ENCODE measurements at regions of chr5 and their contacts with region 1.

Region 1: GRCh38 chr5:109688971-109689739 is 572 bp upstream of the MAN2A1 start:
- DNase-seq: peak; percentile 64 to 84 (median 76)
- ATAC-seq: peak; percentile 71
- H3K4me3 Mint-ChIP-seq: peak overlapping the region; percentile 87 to 95 (median 92)
- H3K27ac Mint-ChIP-seq: peak overlapping the region; percentile 88 to 96 (median 93)
- H3K4me1 Mint-ChIP-seq: peaks cover 17 to 39% (median 33%) of the 10 kb centered on the region in 4 donors
- H3K27me3 Mint-ChIP-seq: no peaks in the 10 kb centered on the region

Region 2: DNA sequence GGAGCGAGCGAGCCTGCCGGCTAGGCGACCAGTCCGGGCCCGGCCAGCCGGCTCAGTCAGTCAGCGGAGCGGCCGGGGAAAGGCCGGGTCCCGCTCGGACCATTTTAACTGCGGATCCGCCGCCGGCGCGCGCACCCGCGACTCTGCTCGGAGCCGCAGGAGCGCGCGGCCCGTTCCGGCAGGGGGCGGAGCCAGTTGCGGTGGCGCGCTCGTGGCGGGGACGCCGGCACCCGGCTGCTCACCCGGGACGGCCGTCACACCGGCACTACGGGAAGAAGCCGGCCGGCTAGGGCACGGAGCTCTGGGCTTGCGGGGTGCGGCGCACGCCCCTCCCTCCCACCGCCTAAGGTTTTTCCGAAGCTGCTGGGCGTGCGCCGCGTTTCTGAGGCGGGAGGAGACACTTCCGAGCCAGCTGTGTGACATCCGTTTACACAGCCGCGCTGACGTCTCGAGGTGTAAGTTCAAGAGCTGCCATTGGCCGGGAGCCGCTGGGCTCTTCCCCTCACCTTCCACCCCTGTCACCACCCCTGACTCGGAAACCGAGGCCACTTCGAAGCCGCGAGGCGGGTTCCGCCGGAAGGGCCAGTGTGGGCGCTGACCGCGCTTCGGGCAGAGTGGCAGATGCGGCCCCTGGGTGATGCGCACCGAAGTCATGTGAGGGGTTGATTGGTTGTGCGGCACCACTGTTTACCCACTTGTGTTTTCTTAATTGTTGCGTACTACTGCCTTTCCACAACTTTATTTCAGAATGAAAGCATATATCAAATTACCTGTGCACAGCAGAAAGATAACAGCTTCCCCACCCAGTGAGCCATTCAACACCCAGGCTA is 1307.0 kb before region 1 on chr5 and contains the start of gene FBXL17:
- POLR2A ChIA-PET with region 1: interaction called, 10 read pairs
- DNase-seq: peak; percentile 78 to 96 (median 92)
- ATAC-seq: peak; percentile 68 to 78
- H3K4me3 Mint-ChIP-seq: peak within 1 kb of the TSS; percentile 86 to 98 (median 92)
- H3K27ac Mint-ChIP-seq: peak within 1 kb of the TSS; percentile 93 to 98 (median 96)
- H3K4me1 Mint-ChIP-seq: peaks cover 22 to 47% (median 40%) of the 10 kb centered on the region in 4 donors
- H3K27me3 Mint-ChIP-seq: no peaks in the 10 kb centered on the region
- polyA plus RNA-seq, gene FBXL17: 4.6 to 5.0 (median 4.9) TPM

Region 3: DNA sequence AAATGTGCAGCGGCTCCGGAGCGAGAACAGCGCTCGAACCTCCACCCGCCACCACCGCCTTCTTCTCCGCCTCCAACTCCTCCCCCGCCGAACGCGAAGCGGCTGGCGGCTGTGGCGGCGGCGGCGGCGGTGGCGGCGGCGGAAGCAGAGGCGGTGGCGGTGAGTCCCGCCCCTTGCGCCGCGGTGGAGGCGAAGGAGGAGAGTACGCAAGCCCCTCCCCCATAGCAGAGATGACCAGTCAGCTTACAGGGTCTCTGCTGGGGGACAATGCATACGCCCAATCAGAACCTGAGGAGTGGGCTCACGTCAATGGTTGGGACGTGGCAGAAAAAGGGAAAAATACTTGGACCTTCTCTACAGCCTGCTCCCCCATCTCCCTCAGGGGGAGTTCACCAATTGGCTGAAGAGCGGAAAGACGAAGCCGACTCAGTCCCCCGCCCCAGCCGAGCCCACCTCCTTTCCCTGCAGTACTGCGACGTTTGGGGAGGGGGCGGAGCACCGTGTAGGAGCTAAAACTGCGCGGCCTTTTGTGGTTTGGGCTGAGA is 279.2 kb before region 1 on chr5 and contains the start of gene PJA2:
- POLR2A ChIA-PET with region 1: interaction called, 21 read pairs
- DNase-seq: peak; percentile 90 to 98 (median 96)
- ATAC-seq: peak; percentile 75 to 77
- H3K4me3 Mint-ChIP-seq: peak within 1 kb of the TSS; percentile 95 to 100 (median 99)
- H3K27ac Mint-ChIP-seq: peak within 1 kb of the TSS; percentile 97 to 100 (median 100)
- H3K4me1 Mint-ChIP-seq: peaks cover 18 to 43% (median 36%) of the 10 kb centered on the region in 4 donors
- H3K27me3 Mint-ChIP-seq: peaks cover 0 to 3% (median 0%) of the 10 kb centered on the region in 5 donors
- polyA plus RNA-seq, gene PJA2: 46.0 to 54.4 (median 47.7) TPM

Region 4: GRCh38 chr5:109857405-109858031 is 168.4 kb after region 1 on chr5:
- POLR2A ChIA-PET with region 1: interaction called, 10 read pairs
- DNase-seq: peak in 6 of 10 donors; percentile 8 to 75 (median 44)
- ATAC-seq: peak; percentile 74 to 85
- H3K4me3 Mint-ChIP-seq: peak overlapping the region; percentile 37 to 86 (median 70)
- H3K27ac Mint-ChIP-seq: peak overlapping the region; percentile 84 to 96 (median 93)
- H3K4me1 Mint-ChIP-seq: peaks cover 32 to 83% (median 78%) of the 10 kb centered on the region in 4 donors
- H3K27me3 Mint-ChIP-seq: no peaks in the 10 kb centered on the region

Region 5: GRCh38 chr5:109921735-109922380 is 232.7 kb after region 1 on chr5:
- POLR2A ChIA-PET with region 1: interaction called, 61 read pairs
- DNase-seq: peak; percentile 29 to 90 (median 72)
- ATAC-seq: peak; percentile 89 to 91
- H3K4me3 Mint-ChIP-seq: peak overlapping the region; percentile 71 to 91 (median 84)
- H3K27ac Mint-ChIP-seq: peak overlapping the region; percentile 93 to 100 (median 97)
- H3K4me1 Mint-ChIP-seq: peaks cover 35 to 72% (median 51%) of the 10 kb centered on the region in 4 donors
- H3K27me3 Mint-ChIP-seq: no peaks in the 10 kb centered on the region

Region 6: GRCh38 chr5:110054240-110054639 is 365.1 kb after region 1 on chr5:
- POLR2A ChIA-PET with region 1: interaction called, 23 read pairs
- DNase-seq: peak; percentile 39 to 93 (median 83)
- ATAC-seq: peak; percentile 93 to 96
- H3K4me3 Mint-ChIP-seq: peak overlapping the region; percentile 20 to 82 (median 52)
- H3K27ac Mint-ChIP-seq: peak overlapping the region; percentile 62 to 92 (median 86)
- H3K4me1 Mint-ChIP-seq: peaks cover 11 to 48% (median 43%) of the 10 kb centered on the region in 4 donors
- H3K27me3 Mint-ChIP-seq: no peaks in the 10 kb centered on the region

Region 7: DNA sequence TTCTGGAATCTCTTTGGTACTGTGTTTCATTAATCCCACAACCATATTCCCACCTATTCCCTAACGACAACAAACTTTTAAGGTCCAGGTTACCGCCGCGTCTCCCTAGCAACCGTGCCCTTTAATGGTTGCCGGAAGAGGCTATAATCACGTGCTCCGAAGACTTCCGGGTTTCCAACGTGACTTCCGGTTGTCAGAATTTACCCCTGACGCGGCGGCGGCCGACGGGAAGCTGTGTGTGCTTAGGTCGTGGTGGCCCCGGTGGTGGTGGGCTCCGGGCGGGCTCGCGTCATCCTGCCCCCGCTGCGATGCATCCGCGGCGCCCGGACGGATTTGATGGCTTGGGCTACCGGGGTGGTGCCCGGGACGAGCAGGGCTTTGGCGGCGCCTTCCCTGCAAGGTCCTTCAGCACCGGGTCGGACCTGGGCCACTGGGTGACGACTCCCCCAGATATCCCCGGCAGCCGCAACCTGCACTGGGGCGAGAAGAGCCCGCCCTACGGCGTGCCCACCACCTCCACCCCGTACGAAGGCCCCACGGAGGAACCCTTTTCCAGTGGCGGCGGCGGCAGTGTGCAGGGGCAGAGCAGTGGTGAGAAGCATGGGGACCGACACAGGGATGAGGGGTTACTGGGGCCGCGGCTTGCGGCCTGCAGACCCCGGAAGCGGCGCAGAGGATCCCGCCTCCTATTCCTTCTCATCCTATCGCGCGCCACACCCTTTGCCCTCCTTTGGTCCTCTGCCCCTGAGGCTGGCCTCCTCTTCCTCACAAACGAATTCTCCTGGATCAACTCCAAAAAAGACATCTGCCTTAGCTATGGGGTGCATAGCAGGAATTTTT is 1049.9 kb after region 1 on chr5 and contains the start of gene SLC25A46:
- POLR2A ChIA-PET with region 1: interaction called, 14 read pairs
- DNase-seq: peak; percentile 76 to 95 (median 89)
- ATAC-seq: peak; percentile 82 to 85
- H3K4me3 Mint-ChIP-seq: peak within 1 kb of the TSS; percentile 91 to 100 (median 97)
- H3K27ac Mint-ChIP-seq: peak within 1 kb of the TSS; percentile 88 to 100 (median 98)
- H3K4me1 Mint-ChIP-seq: peaks cover 8 to 38% (median 33%) of the 10 kb centered on the region in 4 donors
- H3K27me3 Mint-ChIP-seq: peaks cover 0 to 11% (median 3%) of the 10 kb centered on the region in 5 donors
- polyA plus RNA-seq, gene SLC25A46: 33.0 to 36.1 (median 34.5) TPM

Measured in naive thymus-derived CD8-positive, alpha-beta T cell (primary cell).